ENCODE measurements at regions of chr6 and their contacts with region 1.

Region 1: DNA sequence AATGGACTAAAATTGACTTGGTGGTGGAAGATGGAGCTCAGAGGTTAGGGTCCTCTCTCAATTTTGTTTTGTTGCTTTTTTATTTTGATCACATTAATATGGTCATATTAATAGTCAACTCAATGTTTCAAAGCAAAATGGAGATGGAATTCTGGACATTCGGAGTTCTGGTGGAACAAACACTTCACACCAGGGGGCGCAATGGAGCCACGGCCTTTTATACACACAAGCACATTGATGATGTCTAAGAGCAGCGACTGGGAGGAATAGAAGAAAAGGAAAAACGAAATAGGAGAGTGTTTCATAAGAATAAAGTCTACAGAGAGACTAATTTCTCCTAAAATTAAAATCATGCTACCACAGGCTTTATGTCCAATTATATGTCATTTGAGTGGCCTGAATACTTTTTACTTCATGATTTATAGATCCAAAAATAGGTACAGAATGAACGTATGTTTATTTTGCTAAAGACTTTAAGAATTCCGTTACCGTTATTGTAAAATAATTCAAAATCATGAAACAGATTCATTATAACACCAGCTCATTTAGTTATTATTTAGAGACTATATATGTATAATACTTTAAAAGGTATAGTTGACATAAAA is 197.6 kb upstream of the SASH1 start:
- DNase-seq: peak; percentile 42
- CTCF ChIP-seq: peak; percentile 66

Region 2: GRCh38 chr6:148157542-148158240 is 12.7 kb after region 1 on chr6:
- CTCF ChIA-PET with region 1: interaction called, 12 read pairs
- POLR2A ChIA-PET with region 1: no interaction called
- DNase-seq: no peak
- CTCF ChIP-seq: no peak

Region 3: DNA sequence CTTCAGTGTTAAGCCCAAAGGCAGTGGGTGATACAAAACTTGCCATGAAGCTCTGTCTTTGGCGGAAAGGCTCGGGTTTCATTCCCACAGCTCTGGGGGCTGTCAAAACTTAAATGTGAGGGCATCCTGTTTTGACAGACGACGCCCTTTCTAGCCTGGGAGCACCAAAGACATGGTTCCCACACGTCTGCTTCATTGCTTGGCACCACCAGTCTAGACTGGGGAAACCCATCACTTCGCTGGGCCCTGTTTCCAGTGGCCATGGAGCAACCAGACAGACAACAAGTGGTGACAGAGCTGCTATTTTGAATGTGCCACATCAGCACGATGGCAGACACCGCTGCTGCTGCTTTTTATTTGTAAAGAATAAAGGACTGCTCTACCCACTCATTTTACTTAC is 325.1 kb after region 1 on chr6:
- CTCF ChIA-PET with region 1: interaction called, 10 read pairs
- POLR2A ChIA-PET with region 1: no interaction called
- DNase-seq: no peak
- CTCF ChIP-seq: no peak

Measured in GM10248 (cell line).